CD8-positive, alpha-beta T cell (primary cell): ENCODE measurements at regions of chr7 and their contacts with region 1.

Region 1: GRCh38 chr7:101058355-101058754 is 26.9 kb upstream of the TRIM56 start:
- DNase-seq: peak in 8 of 9 experiments; percentile 24 to 66 (median 58)
- ATAC-seq: no peak
- H3K4me3 ChIP-seq: no peak overlapping the region
- H3K4me3 Mint-ChIP-seq: no peak overlapping the region
- H3K27ac ChIP-seq: no peak overlapping the region
- H3K27ac Mint-ChIP-seq: no peak overlapping the region
- H3K4me1 ChIP-seq: no peaks in the 10 kb centered on the region
- H3K4me1 Mint-ChIP-seq: no peaks in the 10 kb centered on the region
- H3K27me3 ChIP-seq: peaks cover 0 to 19% of the 10 kb centered on the region in 2 experiments
- H3K27me3 Mint-ChIP-seq: peaks cover 41% of the 10 kb centered on the region
- CTCF ChIP-seq: no peak

Region 2: GRCh38 chr7:100803398-100804233 is 254.7 kb before region 1 on chr7:
- CTCF ChIA-PET with region 1: interaction called, 4 read pairs
- POLR2A ChIA-PET with region 1: no interaction called
- intact Hi-C with region 1: loop called in 1 of 2 experiments (anchors 1 kb)
- DNase-seq: peak in 5 of 9 experiments; percentile 6 to 59 (median 25)
- ATAC-seq: peak; percentile 66
- H3K4me3 ChIP-seq: no peak overlapping the region
- H3K4me3 Mint-ChIP-seq: no peak overlapping the region
- H3K27ac ChIP-seq: no peak overlapping the region
- H3K27ac Mint-ChIP-seq: no peak overlapping the region
- H3K4me1 ChIP-seq: no peaks in the 10 kb centered on the region
- H3K4me1 Mint-ChIP-seq: peaks cover 2% of the 10 kb centered on the region
- H3K27me3 ChIP-seq: no peaks in the 10 kb centered on the region
- H3K27me3 Mint-ChIP-seq: peaks cover 4% of the 10 kb centered on the region
- CTCF ChIP-seq: no peak

Region 3: DNA sequence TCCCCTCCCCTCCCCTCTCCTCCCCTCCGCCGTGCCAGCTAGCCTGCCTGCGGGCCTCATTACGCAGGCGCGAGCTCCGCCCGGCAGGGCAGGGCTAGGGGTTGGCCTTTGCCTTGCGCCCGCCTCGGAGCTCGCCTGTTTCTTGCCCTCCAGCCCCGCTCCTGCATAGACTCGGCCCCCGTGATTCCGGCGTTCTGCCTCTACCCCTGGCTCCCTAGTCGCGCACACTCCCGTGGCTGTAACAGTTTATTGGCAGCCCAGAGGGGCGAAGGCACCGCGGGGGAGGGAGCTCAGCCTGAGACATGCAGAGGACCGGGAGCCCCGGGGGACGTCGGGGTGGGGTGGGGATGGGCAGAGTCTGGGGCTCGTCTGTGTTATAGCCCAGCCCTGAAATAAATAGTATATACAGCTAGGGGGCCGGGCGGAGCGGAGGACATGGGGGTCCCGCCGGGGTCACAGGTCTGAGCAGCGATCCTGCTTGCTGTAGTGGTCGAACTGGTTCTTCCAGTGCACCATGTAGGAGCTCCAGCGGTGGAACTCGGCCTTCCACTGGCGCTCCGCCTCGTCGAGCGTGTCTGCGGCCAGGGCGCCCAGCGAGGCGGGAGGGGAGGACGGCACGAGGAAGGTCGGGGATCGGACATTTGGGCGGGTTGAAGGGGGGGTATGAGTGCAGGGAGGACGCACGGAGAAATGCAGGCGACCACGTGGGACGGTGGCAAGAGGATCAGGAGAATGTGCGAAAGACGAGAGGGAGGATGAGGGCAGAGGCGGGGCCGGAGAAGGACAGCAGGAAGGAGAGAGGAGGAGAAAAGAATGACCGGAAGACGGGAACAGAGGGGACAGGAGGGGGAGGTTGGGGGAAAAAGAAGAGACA is 168.4 kb before region 1 on chr7:
- CTCF ChIA-PET with region 1: interaction called, 15 read pairs
- POLR2A ChIA-PET with region 1: interaction called, 3 read pairs
- intact Hi-C with region 1: no loop called
- DNase-seq: peak; percentile 79 to 97 (median 91)
- ATAC-seq: peak; percentile 82
- H3K4me3 ChIP-seq: peak overlapping the region; percentile 65 to 90
- H3K4me3 Mint-ChIP-seq: peak overlapping the region; percentile 87
- H3K27ac ChIP-seq: peak overlapping the region; percentile 22 to 44
- H3K27ac Mint-ChIP-seq: peak overlapping the region; percentile 72
- H3K4me1 ChIP-seq: peaks cover 40% of the 10 kb centered on the region
- H3K4me1 Mint-ChIP-seq: peaks cover 42% of the 10 kb centered on the region
- H3K27me3 ChIP-seq: peaks cover 0 to 20% of the 10 kb centered on the region in 2 experiments
- H3K27me3 Mint-ChIP-seq: peaks cover 13% of the 10 kb centered on the region
- CTCF ChIP-seq: no peak

Region 4: GRCh38 chr7:100896732-100897608 is 161.4 kb before region 1 on chr7:
- CTCF ChIA-PET with region 1: interaction called, 15 read pairs
- POLR2A ChIA-PET with region 1: interaction called, 3 read pairs
- intact Hi-C with region 1: loop called (anchors 1 kb)
- DNase-seq: peak in 7 of 9 experiments; percentile 54 to 71 (median 58)
- ATAC-seq: peak; percentile 57
- H3K4me3 ChIP-seq: no peak overlapping the region
- H3K4me3 Mint-ChIP-seq: peak overlapping the region; percentile 78
- H3K27ac ChIP-seq: no peak overlapping the region
- H3K27ac Mint-ChIP-seq: no peak overlapping the region
- H3K4me1 ChIP-seq: peaks cover 8% of the 10 kb centered on the region
- H3K4me1 Mint-ChIP-seq: peaks cover 8% of the 10 kb centered on the region
- H3K27me3 ChIP-seq: peaks cover 8 to 30% of the 10 kb centered on the region in 2 experiments
- H3K27me3 Mint-ChIP-seq: peaks cover 36% of the 10 kb centered on the region
- CTCF ChIP-seq: peak; percentile 68

Region 5: DNA sequence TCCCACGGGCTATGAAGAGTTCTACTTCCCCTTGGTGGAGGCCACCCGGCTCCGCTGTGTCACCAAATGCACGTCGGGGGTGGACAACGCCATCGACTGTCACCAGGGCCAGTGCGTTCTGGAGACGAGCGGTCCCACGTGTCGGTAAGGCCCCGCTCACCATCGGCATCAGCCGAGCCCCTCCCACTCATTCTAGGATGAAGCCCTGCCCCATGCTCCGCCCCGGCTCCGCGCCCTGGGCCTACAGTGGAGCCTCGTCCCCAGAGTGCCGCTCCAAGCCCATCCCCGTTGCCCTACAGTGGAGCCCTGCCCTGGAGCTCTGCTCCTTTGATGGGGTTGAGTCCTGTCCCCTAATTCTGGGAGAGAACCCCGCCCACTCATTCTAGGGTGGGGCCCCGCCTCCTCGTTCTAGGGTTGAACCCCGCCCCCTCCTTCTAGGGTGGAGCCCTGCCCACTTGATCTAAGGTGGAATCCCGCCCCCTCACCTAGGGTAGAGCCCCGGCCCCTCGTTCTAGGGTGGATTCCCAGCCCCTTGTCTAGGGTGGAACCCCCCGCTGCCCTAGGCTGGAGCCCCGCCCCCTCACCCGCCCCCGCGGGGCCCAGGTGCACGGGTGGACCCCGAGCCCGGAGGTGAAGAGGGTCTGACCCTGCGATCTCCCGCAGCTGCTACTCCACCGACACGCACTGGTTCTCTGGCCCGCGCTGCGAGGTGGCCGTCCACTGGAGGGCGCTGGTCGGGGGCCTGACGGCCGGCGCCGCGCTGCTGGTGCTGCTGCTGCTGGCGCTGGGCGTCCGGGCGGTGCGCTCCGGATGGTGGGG is 92.4 kb before region 1 on chr7:
- CTCF ChIA-PET with region 1: interaction called, 3 read pairs
- POLR2A ChIA-PET with region 1: no interaction called
- intact Hi-C with region 1: loop called (anchors 1 kb)
- DNase-seq: peak; percentile 57 to 84 (median 71)
- ATAC-seq: peak; percentile 84
- H3K4me3 ChIP-seq: peak overlapping the region; percentile 35 to 71
- H3K4me3 Mint-ChIP-seq: peak overlapping the region; percentile 81
- H3K27ac ChIP-seq: no peak overlapping the region
- H3K27ac Mint-ChIP-seq: no peak overlapping the region
- H3K4me1 ChIP-seq: peaks cover 21% of the 10 kb centered on the region
- H3K4me1 Mint-ChIP-seq: peaks cover 24% of the 10 kb centered on the region
- H3K27me3 ChIP-seq: peaks cover 36 to 40% of the 10 kb centered on the region in 2 experiments
- H3K27me3 Mint-ChIP-seq: peaks cover 60% of the 10 kb centered on the region
- CTCF ChIP-seq: peak; percentile 56

Region 6: GRCh38 chr7:101085162-101085987 is 27.0 kb after region 1 on chr7 and contains the start of gene TRIM56:
- CTCF ChIA-PET with region 1: interaction called, 14 read pairs
- POLR2A ChIA-PET with region 1: no interaction called
- intact Hi-C with region 1: no loop called
- DNase-seq: peak; percentile 43 to 89 (median 76)
- ATAC-seq: peak; percentile 91
- H3K4me3 ChIP-seq: peak within 1 kb of the TSS; percentile 81 to 95
- H3K4me3 Mint-ChIP-seq: peak within 1 kb of the TSS; percentile 98
- H3K27ac ChIP-seq: peak within 1 kb of the TSS; percentile 91 to 94
- H3K27ac Mint-ChIP-seq: peak within 1 kb of the TSS; percentile 98
- H3K4me1 ChIP-seq: peaks cover 30% of the 10 kb centered on the region
- H3K4me1 Mint-ChIP-seq: peaks cover 27% of the 10 kb centered on the region
- H3K27me3 ChIP-seq: no peaks in the 10 kb centered on the region
- H3K27me3 Mint-ChIP-seq: no peaks in the 10 kb centered on the region
- CTCF ChIP-seq: no peak
- total RNA-seq, gene TRIM56: 24.0 to 26.0 TPM